ENCODE measurements at regions of chr3 and their contacts with region 1.

Region 1: GRCh38 chr3:180934638-180935037 is 22.2 kb downstream of the FXR1 start:
- DNase-seq: no peak
- ATAC-seq: no peak
- H3K4me3 ChIP-seq: no peak overlapping the region
- H3K27ac ChIP-seq: no peak overlapping the region
- H3K4me1 ChIP-seq: no peaks in the 10 kb centered on the region
- H3K27me3 ChIP-seq: no peaks in the 10 kb centered on the region
- CTCF ChIP-seq: no peak
- EP300 ChIP-seq: no peak
- POLR2A ChIP-seq: no peak
- RAD21 ChIP-seq: no peak

Region 2: GRCh38 chr3:180912304-180913296 is 22.0 kb before region 1 on chr3 and contains the start of gene FXR1:
- CTCF ChIA-PET with region 1: interaction called, 10 read pairs
- POLR2A ChIA-PET with region 1: interaction called, 6 read pairs
- RAD21 ChIA-PET with region 1: interaction called, 4 read pairs
- SMC1A ChIA-PET with region 1: no interaction called
- in situ Hi-C with region 1: no loop called
- intact Hi-C with region 1: no loop called
- DNase-seq: peak; percentile 66
- ATAC-seq: peak; percentile 99
- H3K4me3 ChIP-seq: peak within 1 kb of the TSS; percentile 97
- H3K27ac ChIP-seq: peak within 1 kb of the TSS; percentile 97
- H3K4me1 ChIP-seq: no peaks in the 10 kb centered on the region
- H3K27me3 ChIP-seq: no peaks in the 10 kb centered on the region
- CTCF ChIP-seq: peak; percentile 72 to 82 (median 80)
- EP300 ChIP-seq: no peak
- POLR2A ChIP-seq: peak; percentile 89
- RAD21 ChIP-seq: peak; percentile 44
- polyA plus RNA-seq, gene FXR1: 46.0 to 62.9 TPM

Region 3: DNA sequence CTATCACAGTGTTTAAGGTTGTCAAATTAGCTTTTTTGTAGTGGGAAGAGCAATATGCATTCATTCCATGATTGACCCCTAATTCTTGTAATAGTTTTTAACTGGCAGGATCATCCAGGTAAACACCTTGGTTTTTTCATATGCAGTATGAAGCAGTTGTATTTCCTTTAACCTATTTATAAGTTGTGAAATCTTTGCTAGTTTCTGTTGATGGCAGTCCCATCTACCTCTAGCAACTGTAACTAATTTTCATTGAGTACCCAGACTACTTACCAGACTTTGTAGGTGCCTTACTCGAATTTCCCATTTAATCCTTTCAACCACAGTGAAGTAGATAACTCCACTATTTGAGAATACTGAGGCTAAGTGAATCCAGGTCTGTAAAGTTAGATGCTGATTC is 16.1 kb before region 1 on chr3:
- CTCF ChIA-PET with region 1: interaction called, 10 read pairs
- POLR2A ChIA-PET with region 1: interaction called, 7 read pairs
- RAD21 ChIA-PET with region 1: interaction called, 4 read pairs
- SMC1A ChIA-PET with region 1: interaction called, 4 read pairs
- in situ Hi-C with region 1: no loop called
- intact Hi-C with region 1: loop called (anchors 2 kb)
- DNase-seq: no peak
- ATAC-seq: peak; percentile 39
- H3K4me3 ChIP-seq: no peak overlapping the region
- H3K27ac ChIP-seq: no peak overlapping the region
- H3K4me1 ChIP-seq: no peaks in the 10 kb centered on the region
- H3K27me3 ChIP-seq: no peaks in the 10 kb centered on the region
- CTCF ChIP-seq: no peak
- EP300 ChIP-seq: no peak
- POLR2A ChIP-seq: no peak
- RAD21 ChIP-seq: no peak

Measured in GM12878 (cell line).